ENCODE measurements at regions of chr3 and their contacts with region 1.

Region 1: DNA sequence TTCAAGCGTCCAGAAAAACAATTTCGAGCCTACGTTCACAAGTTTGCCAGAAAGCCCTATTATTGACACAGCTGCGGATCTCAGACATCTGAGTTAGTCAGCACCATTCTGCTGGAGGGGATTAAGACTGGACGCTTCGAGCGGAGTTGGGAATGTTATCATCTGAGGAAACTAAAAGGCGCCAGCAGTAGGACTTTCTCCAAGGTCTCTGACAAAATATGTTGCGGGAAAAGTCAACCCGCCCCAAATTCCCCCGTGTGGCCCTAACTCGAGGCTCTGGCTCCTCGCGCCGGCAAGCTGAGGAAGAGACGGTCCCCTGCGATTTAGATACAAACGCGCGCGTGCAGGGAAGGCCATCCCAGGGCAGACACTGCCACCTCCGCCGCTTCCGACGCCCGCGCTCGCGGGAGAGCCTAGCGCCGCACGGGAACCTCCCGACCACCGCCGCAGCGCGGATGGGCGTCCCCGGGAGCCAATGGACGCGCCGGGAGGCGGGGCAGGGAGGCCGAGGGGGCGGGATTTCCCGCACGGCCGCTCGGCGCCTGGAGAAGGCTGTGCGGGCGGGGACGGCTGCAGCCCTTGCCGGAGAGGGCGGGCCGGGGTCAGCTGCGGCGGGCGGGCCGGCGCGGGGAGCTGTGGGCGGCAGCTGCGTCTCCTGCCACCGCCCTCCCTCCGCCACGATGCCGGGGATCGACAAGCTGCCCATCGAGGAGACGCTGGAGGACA is at the start of gene APPL1:
- DNase-seq: peak; percentile 95
- H3K4me3 ChIP-seq: peak within 1 kb of the TSS; percentile 72 to 93 (median 88)
- H3K27ac ChIP-seq: peak within 1 kb of the TSS; percentile 91 to 99 (median 92)
- H3K4me1 ChIP-seq: peaks cover 13 to 41% (median 32%) of the 10 kb centered on the region in 4 donors
- H3K27me3 ChIP-seq: no peaks in the 10 kb centered on the region
- CTCF ChIP-seq: peak in 1 of 3 experiments; percentile 4
- EP300 ChIP-seq: no peak
- POLR2A ChIP-seq: peak; percentile 54
- total RNA-seq, gene APPL1: 41.1 to 53.2 (median 46.9) TPM

Region 2: DNA sequence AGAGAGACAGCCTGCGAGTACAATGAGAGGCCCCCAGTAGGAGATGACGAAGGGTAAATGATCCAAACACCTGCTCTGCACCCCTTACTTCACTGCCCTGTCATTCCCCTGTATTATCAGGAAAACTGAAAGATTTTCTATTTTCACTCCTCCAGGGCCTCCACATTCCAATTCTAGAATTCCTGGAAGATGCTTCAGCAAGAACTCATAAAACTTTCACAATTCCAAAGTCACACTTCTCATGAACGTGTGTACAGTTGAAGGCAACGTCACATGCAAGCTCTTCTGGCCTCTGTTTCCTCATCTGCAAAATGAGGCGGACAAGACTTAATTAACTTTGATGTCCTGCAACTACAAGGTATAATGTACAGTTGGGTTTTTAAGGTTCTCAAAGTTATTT is 229.7 kb before region 1 on chr3:
- intact Hi-C with region 1: loop called (anchors 10 kb)
- DNase-seq: no peak
- H3K4me3 ChIP-seq: no peak overlapping the region
- H3K27ac ChIP-seq: peak overlapping the region; percentile 35 to 79 (median 56)
- H3K4me1 ChIP-seq: peaks cover 0 to 31% (median 26%) of the 10 kb centered on the region in 4 donors
- H3K27me3 ChIP-seq: no peaks in the 10 kb centered on the region
- CTCF ChIP-seq: no peak
- EP300 ChIP-seq: no peak
- POLR2A ChIP-seq: no peak

Region 3: GRCh38 chr3:57100046-57100695 is 127.2 kb before region 1 on chr3:
- intact Hi-C with region 1: loop called (anchors 10 kb)
- DNase-seq: no peak
- H3K4me3 ChIP-seq: no peak overlapping the region
- H3K27ac ChIP-seq: no peak overlapping the region
- H3K4me1 ChIP-seq: peaks cover 0 to 5% (median 0%) of the 10 kb centered on the region in 4 donors
- H3K27me3 ChIP-seq: no peaks in the 10 kb centered on the region
- CTCF ChIP-seq: peak in 2 of 3 experiments; percentile 85 to 86
- EP300 ChIP-seq: no peak
- POLR2A ChIP-seq: no peak

Region 4: GRCh38 chr3:57169872-57170623 is 57.3 kb before region 1 on chr3:
- intact Hi-C with region 1: loop called (anchors 2 kb)
- DNase-seq: no peak
- H3K4me3 ChIP-seq: peak overlapping the region; percentile 53 to 62 (median 55)
- H3K27ac ChIP-seq: no peak overlapping the region
- H3K4me1 ChIP-seq: peaks cover 0 to 19% (median 18%) of the 10 kb centered on the region in 4 donors
- H3K27me3 ChIP-seq: no peaks in the 10 kb centered on the region
- CTCF ChIP-seq: peak; percentile 68 to 91 (median 75)
- EP300 ChIP-seq: no peak
- POLR2A ChIP-seq: no peak

Region 5: GRCh38 chr3:57256844-57257243 is 29.5 kb after region 1 on chr3:
- intact Hi-C with region 1: no loop called
- DNase-seq: no peak
- H3K4me3 ChIP-seq: no peak overlapping the region
- H3K27ac ChIP-seq: no peak overlapping the region
- H3K4me1 ChIP-seq: no peaks in the 10 kb centered on the region
- H3K27me3 ChIP-seq: no peaks in the 10 kb centered on the region
- CTCF ChIP-seq: no peak
- EP300 ChIP-seq: no peak
- POLR2A ChIP-seq: no peak

Measured in esophagus muscularis mucosa (tissue), 4 donors.